ENCODE measurements at regions of chr2 and their contacts with region 1.

Region 1: GRCh38 chr2:45611020-45611737 is at the start of gene SRBD1:
- DNase-seq: peak; percentile 94
- ATAC-seq: peak; percentile 98
- H3K4me3 Mint-ChIP-seq: peak within 1 kb of the TSS; percentile 96
- H3K27ac Mint-ChIP-seq: peak within 1 kb of the TSS; percentile 95
- H3K4me1 Mint-ChIP-seq: peaks cover 29% of the 10 kb centered on the region
- H3K27me3 Mint-ChIP-seq: no peaks in the 10 kb centered on the region
- CTCF ChIP-seq: no peak
- total RNA-seq, gene SRBD1: 20.2 and 20.8 TPM in 2 replicates

Region 2: GRCh38 chr2:45554073-45554741 is 57.0 kb before region 1 on chr2:
- CTCF ChIA-PET with region 1: no interaction called
- POLR2A ChIA-PET with region 1: interaction called, 11 read pairs
- intact Hi-C with region 1: no loop called
- DNase-seq: no peak
- ATAC-seq: no peak
- H3K4me3 Mint-ChIP-seq: no peak overlapping the region
- H3K27ac Mint-ChIP-seq: no peak overlapping the region
- H3K4me1 Mint-ChIP-seq: no peaks in the 10 kb centered on the region
- H3K27me3 Mint-ChIP-seq: no peaks in the 10 kb centered on the region
- CTCF ChIP-seq: no peak

Region 3: DNA sequence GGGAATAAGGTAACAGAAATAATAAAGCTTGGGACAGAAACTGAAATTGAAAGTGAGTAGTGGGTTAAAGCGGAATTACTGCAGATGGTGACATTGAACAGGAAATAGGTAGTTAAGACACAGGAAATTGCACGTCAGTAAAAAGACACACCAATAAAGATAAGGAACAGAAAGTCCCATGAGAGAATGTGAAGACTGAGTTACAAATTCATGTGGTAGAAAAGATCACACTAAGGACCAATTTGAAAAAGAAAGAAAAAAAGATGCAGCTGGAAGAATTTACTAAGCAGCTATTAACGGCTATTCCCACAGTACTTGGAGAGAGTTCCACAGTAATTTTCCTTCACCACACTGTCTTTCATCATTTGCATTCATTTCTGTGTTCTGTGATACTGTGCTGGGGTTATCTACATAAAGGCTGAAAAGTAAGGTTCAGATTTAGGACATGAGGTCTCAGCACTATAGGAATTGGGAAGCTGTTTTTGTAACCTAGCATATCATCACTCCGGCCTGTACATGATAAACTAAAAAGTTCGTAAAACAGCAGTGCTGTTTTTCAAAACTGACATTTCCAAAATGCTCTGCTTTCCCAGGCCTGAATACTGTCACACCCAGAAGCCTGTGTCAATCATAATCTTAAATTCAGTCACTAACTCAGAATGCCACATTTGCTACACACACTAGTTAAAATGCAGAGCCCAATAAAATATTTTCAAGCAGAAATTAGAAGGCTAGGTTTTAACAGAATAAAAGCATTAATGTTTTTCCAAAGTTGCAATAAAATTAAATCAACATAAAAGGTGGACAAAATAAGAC is 43.0 kb before region 1 on chr2:
- CTCF ChIA-PET with region 1: no interaction called
- POLR2A ChIA-PET with region 1: interaction called, 13 read pairs
- intact Hi-C with region 1: loop called (anchors 1 kb)
- DNase-seq: no peak
- ATAC-seq: peak; percentile 99
- H3K4me3 Mint-ChIP-seq: peak overlapping the region; percentile 80
- H3K27ac Mint-ChIP-seq: peak overlapping the region; percentile 93
- H3K4me1 Mint-ChIP-seq: peaks cover 9% of the 10 kb centered on the region
- H3K27me3 Mint-ChIP-seq: no peaks in the 10 kb centered on the region
- CTCF ChIP-seq: no peak

Region 4: GRCh38 chr2:45585267-45585861 is 25.8 kb before region 1 on chr2:
- CTCF ChIA-PET with region 1: interaction called, 3 read pairs
- POLR2A ChIA-PET with region 1: interaction called, 3 read pairs
- intact Hi-C with region 1: loop called (anchors 2 kb)
- DNase-seq: no peak
- ATAC-seq: peak; percentile 52
- H3K4me3 Mint-ChIP-seq: no peak overlapping the region
- H3K27ac Mint-ChIP-seq: no peak overlapping the region
- H3K4me1 Mint-ChIP-seq: peaks cover 13% of the 10 kb centered on the region
- H3K27me3 Mint-ChIP-seq: no peaks in the 10 kb centered on the region
- CTCF ChIP-seq: peak; percentile 48

Region 5: GRCh38 chr2:45595721-45596435 is 15.3 kb before region 1 on chr2:
- CTCF ChIA-PET with region 1: no interaction called
- POLR2A ChIA-PET with region 1: no interaction called
- intact Hi-C with region 1: no loop called
- DNase-seq: no peak
- ATAC-seq: no peak
- H3K4me3 Mint-ChIP-seq: no peak overlapping the region
- H3K27ac Mint-ChIP-seq: no peak overlapping the region
- H3K4me1 Mint-ChIP-seq: peaks cover 3% of the 10 kb centered on the region
- H3K27me3 Mint-ChIP-seq: no peaks in the 10 kb centered on the region
- CTCF ChIP-seq: no peak

Region 6: DNA sequence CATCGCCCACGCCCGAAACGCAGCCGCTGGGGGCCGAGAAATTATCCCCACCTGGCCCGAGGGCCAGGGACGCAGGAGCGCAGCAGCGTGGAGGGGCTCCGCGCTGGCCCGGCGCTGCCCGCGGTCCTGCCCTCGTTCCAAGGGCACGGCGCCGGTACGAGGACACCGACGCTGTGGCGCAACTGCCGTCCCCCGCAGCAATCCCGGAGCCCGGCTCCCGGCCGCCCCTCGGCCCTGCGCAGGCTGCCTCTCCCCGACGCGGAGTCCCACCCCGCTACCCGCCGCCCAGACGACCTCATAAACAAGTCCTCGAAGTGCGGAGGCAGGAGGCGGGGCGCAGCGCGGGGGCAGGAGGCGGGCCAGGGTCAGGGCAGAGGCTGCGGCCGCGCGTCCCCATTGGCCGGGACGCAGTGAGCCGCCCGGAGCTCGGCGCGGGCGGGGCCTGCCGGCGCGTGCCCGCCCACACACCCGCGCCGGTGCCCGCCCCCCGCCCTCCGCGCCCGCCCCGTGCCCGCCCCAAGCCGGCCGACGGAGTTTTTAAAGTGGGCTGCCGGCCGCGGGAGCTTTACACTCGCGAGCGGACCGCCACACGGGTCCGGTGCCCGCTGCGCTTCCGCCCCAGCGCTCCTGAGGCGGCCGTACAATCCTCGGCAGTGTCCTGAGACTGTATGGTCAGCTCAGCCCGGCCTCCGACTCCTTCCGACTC is 685.8 kb after region 1 on chr2 and contains the start of gene EPAS1:
- CTCF ChIA-PET with region 1: no interaction called
- POLR2A ChIA-PET with region 1: no interaction called
- intact Hi-C with region 1: loop called (anchors 5 kb)
- DNase-seq: peak; percentile 69
- ATAC-seq: peak; percentile 94
- H3K4me3 Mint-ChIP-seq: peak within 1 kb of the TSS; percentile 91
- H3K27ac Mint-ChIP-seq: peak within 1 kb of the TSS; percentile 41
- H3K4me1 Mint-ChIP-seq: peaks cover 24% of the 10 kb centered on the region
- H3K27me3 Mint-ChIP-seq: peaks cover 47% of the 10 kb centered on the region
- CTCF ChIP-seq: no peak
- total RNA-seq, gene EPAS1: 0.05 and 0.47 TPM in 2 replicates